GM13977 (cell line): ENCODE measurements at regions of chr1 and their contacts with region 1.

Region 1: DNA sequence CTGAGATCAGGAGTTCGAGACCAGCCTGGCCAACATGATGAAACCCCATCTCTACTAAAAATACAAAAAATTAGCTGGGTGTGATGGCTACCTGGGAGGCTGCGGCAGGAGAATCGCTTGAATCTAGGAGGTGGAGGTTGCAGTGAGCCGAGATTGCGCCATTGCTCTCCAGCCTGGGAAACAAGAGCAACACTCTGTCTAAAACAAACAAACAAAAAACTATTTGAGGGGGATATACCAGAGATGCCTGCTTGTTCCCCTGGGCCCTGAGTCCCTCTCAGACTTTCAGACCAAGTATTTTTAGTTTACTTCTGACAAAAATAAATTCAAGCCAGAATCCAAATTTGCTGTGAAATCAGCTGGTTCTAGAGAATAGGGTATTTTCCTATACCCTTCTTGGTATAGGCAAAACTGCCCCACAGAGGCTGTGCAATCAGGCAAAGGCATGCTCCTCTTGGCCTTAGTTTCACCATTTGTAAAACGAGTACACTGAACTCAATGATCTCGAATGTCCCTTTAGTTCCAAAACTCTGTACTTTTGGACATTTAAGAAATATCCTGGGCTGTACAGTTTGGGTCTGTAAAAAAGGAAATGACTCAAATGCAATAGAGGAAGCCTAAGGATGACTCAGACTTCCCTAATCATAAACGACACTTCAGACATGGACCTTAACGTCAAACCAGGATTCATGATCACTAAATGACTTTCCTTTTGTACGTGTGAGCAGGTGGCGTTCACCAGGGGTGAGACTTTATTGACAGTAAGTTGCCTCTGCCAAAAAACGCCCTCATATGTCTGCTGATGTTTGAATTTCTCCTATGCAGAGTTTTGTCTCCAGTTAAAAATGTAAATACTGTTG is 16.1 kb downstream of the ENSA start:
- DNase-seq: peak; percentile 54
- CTCF ChIP-seq: no peak

Region 2: DNA sequence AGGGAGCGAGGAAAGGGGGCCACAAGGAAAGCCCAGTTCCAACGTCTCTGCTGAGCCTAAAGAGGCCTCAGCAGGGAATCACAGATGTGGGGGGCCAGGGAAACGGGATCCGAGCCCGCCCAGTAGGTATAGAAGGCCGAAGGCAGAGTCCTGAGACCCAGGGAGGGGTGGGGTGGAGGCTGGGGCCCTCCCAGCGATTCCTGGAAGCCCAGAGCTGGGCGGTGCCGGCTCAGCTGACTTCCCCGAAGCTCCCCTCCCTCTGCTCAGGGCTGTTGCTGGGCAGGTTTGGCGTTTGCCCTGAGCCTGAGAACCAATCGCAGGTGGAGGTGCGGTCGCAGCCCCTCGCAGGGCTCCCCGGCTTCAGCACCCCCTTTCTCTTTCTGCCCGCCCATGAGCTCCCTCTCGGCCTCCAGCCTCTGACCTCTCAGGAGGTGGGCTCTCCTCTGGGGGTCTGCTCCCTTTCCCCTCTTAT is 51.3 kb before region 1 on chr1:
- in situ Hi-C with region 1: loop called (anchors 10 kb)
- DNase-seq: peak; percentile 88
- CTCF ChIP-seq: no peak

Region 3: DNA sequence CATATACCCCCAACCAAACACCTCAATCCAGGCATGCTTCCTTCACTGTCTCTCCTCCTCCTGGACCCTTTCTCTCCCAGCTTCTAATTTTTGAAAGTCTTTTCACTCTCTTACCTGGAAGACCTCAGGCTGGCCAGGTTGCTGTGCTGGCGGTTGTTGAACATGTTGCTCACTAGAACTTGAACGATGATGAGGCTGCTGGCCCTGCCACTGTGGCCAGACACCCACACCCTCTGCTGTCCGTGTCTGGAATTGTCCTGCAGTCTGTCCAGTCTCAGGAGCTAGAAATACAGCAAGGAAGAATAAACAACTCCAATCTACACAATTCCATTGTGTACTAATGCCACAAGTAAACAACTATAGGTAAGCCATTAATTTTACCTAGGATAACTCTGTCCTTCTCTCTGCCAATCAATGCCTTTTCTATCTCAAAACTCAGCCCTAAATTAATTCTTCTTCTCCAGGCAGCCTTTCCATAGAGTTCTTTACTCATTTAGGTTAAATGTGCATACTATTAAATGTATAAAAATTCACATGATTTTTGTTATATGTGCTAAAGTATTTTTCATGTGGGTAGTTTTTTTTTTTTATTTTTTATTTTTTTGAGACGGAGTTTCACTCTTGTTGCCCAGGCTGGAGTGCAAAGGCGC is 199.9 kb after region 1 on chr1:
- in situ Hi-C with region 1: no loop called
- DNase-seq: no peak
- CTCF ChIP-seq: peak; percentile 54